Naive thymus-derived CD4-positive, alpha-beta T cell (primary cell): ENCODE measurements at regions of chr2 and their contacts with region 1.

Region 1: GRCh38 chr2:196171248-196171871 is at the start of gene STK17B:
- DNase-seq: peak; percentile 92 to 97 (median 95)
- ATAC-seq: peak; percentile 81
- H3K4me3 ChIP-seq: peak within 1 kb of the TSS; percentile 78
- H3K4me3 Mint-ChIP-seq: peak within 1 kb of the TSS; percentile 87 to 98 (median 94)
- H3K27ac ChIP-seq: peak within 1 kb of the TSS; percentile 98
- H3K27ac Mint-ChIP-seq: peak within 1 kb of the TSS; percentile 89 to 98 (median 96)
- H3K4me1 ChIP-seq: peaks cover 29 to 37% of the 10 kb centered on the region in 2 donors
- H3K4me1 Mint-ChIP-seq: peaks cover 19 to 43% (median 38%) of the 10 kb centered on the region in 7 donors
- H3K27me3 ChIP-seq: no peaks in the 10 kb centered on the region
- H3K27me3 Mint-ChIP-seq: peaks cover 0 to 2% (median 0%) of the 10 kb centered on the region in 5 donors
- total RNA-seq, gene STK17B: 274 to 513 (median 338) TPM

Region 2: GRCh38 chr2:195533771-195534642 is 637.4 kb before region 1 on chr2:
- CTCF ChIA-PET with region 1: no interaction called
- POLR2A ChIA-PET with region 1: interaction called, 7 read pairs
- intact Hi-C with region 1: loop called (anchors 2 to 5 kb)
- DNase-seq: peak in 8 of 9 donors; percentile 28 to 63 (median 42)
- ATAC-seq: peak; percentile 48
- H3K4me3 ChIP-seq: peak overlapping the region; percentile 51
- H3K4me3 Mint-ChIP-seq: peak overlapping the region; percentile 77 to 95 (median 90)
- H3K27ac ChIP-seq: peak overlapping the region; percentile 77
- H3K27ac Mint-ChIP-seq: peak overlapping the region; percentile 92 to 100 (median 98)
- H3K4me1 ChIP-seq: peaks cover 70 to 73% of the 10 kb centered on the region in 2 donors
- H3K4me1 Mint-ChIP-seq: peaks cover 69 to 90% (median 86%) of the 10 kb centered on the region in 7 donors
- H3K27me3 ChIP-seq: no peaks in the 10 kb centered on the region
- H3K27me3 Mint-ChIP-seq: no peaks in the 10 kb centered on the region

Region 3: DNA sequence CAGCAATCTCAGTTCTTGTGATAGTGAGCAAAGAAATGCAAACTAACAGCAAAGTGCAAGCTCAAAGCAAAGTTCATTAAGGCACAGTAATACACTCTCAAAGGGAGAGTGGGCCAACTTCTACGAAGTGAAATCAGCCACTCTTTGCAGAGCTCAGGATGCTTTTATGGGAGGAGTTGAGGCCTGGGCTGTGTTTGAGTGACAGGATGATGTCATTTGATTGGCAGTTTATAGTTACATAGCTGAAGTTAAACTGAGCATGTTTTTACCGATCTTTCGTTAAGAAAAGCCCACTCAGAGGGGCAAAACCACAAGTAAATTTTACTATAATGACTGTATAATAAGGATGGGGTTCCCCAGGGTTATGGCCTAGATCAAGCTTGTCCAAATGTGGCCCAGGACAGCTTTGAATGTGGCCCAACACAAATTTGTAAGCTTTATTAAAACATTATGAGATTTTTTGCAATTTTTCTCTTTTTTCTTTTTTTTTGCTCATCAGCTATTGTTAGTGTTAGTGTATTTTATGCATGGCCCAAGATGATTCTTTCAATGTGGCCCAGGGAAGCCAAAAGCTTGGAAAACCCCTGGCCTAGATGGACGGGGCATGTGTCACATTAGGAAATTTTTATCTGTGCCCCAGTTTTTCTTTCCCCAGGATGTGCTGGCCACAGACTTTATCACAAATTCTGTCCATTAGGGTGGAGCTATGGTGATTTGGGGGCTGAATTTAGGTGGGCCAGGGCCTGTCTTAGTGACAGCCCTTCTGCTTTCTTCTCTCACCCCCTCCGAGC is 94.4 kb before region 1 on chr2:
- CTCF ChIA-PET with region 1: interaction called, 16 read pairs
- POLR2A ChIA-PET with region 1: interaction called, 39 read pairs
- intact Hi-C with region 1: loop called in 1 of 2 experiments (anchors 1 kb)
- DNase-seq: no peak
- ATAC-seq: no peak
- H3K4me3 ChIP-seq: no peak overlapping the region
- H3K4me3 Mint-ChIP-seq: no peak overlapping the region
- H3K27ac ChIP-seq: no peak overlapping the region
- H3K27ac Mint-ChIP-seq: no peak overlapping the region
- H3K4me1 ChIP-seq: peaks cover 9 to 13% of the 10 kb centered on the region in 2 donors
- H3K4me1 Mint-ChIP-seq: peaks cover 10 to 34% (median 25%) of the 10 kb centered on the region in 7 donors
- H3K27me3 ChIP-seq: no peaks in the 10 kb centered on the region
- H3K27me3 Mint-ChIP-seq: no peaks in the 10 kb centered on the region

Region 4: GRCh38 chr2:196160101-196160500 is 11.3 kb before region 1 on chr2:
- CTCF ChIA-PET with region 1: interaction called, 9 read pairs
- POLR2A ChIA-PET with region 1: interaction called, 87 read pairs
- intact Hi-C with region 1: loop called (anchors 1 kb)
- DNase-seq: peak in 8 of 9 donors; percentile 61 to 92 (median 88)
- ATAC-seq: peak; percentile 84
- H3K4me3 ChIP-seq: peak overlapping the region; percentile 33
- H3K4me3 Mint-ChIP-seq: peak overlapping the region; percentile 61 to 98 (median 87)
- H3K27ac ChIP-seq: peak overlapping the region; percentile 94
- H3K27ac Mint-ChIP-seq: peak overlapping the region; percentile 84 to 98 (median 94)
- H3K4me1 ChIP-seq: peaks cover 53 to 65% of the 10 kb centered on the region in 2 donors
- H3K4me1 Mint-ChIP-seq: peaks cover 45 to 85% (median 69%) of the 10 kb centered on the region in 7 donors
- H3K27me3 ChIP-seq: no peaks in the 10 kb centered on the region
- H3K27me3 Mint-ChIP-seq: no peaks in the 10 kb centered on the region

Region 5: DNA sequence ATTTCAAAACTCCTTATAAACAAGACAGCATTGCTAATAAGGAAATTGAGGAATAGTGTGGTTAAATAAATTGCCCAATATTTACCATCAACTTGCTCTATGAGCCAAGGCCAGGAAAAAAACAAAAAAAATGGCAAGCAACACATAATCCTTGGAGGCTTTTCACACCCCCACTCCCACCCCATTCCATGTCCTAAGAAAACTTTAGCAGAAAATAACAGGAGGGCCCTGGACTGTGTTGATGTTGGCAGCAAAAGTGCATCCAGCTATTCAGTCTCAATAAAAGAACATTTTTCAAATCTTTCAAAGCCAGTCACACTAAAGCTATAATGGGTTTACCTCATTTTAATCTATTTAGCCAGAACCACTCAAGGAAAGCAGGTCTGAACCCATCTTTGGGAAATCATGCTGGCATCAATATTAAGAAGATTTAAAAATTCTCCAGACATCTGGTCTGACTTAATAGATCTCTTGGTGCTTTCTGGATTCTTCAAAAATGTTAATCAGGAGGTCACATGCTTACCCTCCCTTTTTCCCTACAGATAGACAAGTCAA is 34.6 kb after region 1 on chr2:
- CTCF ChIA-PET with region 1: interaction called, 5 read pairs
- POLR2A ChIA-PET with region 1: interaction called, 359 read pairs
- intact Hi-C with region 1: loop called (anchors 1 kb)
- DNase-seq: no peak
- ATAC-seq: no peak
- H3K4me3 ChIP-seq: no peak overlapping the region
- H3K4me3 Mint-ChIP-seq: no peak overlapping the region
- H3K27ac ChIP-seq: no peak overlapping the region
- H3K27ac Mint-ChIP-seq: peak overlapping the region in 7 of 9 donors; percentile 28 to 85 (median 66)
- H3K4me1 ChIP-seq: peaks cover 17 to 31% of the 10 kb centered on the region in 2 donors
- H3K4me1 Mint-ChIP-seq: peaks cover 29 to 75% (median 51%) of the 10 kb centered on the region in 7 donors
- H3K27me3 ChIP-seq: no peaks in the 10 kb centered on the region
- H3K27me3 Mint-ChIP-seq: no peaks in the 10 kb centered on the region

Region 6: GRCh38 chr2:196239622-196240587 is 68.5 kb after region 1 on chr2:
- CTCF ChIA-PET with region 1: interaction called, 4 read pairs
- POLR2A ChIA-PET with region 1: interaction called, 38 read pairs
- intact Hi-C with region 1: loop called (anchors 1 kb)
- DNase-seq: peak; percentile 33 to 90 (median 83)
- ATAC-seq: peak; percentile 87
- H3K4me3 ChIP-seq: peak overlapping the region; percentile 36
- H3K4me3 Mint-ChIP-seq: peak overlapping the region; percentile 64 to 87 (median 76)
- H3K27ac ChIP-seq: peak overlapping the region; percentile 71
- H3K27ac Mint-ChIP-seq: peak overlapping the region; percentile 90 to 99 (median 97)
- H3K4me1 ChIP-seq: peaks cover 57 to 60% of the 10 kb centered on the region in 2 donors
- H3K4me1 Mint-ChIP-seq: peaks cover 55 to 90% (median 80%) of the 10 kb centered on the region in 7 donors
- H3K27me3 ChIP-seq: no peaks in the 10 kb centered on the region
- H3K27me3 Mint-ChIP-seq: no peaks in the 10 kb centered on the region

Region 7: DNA sequence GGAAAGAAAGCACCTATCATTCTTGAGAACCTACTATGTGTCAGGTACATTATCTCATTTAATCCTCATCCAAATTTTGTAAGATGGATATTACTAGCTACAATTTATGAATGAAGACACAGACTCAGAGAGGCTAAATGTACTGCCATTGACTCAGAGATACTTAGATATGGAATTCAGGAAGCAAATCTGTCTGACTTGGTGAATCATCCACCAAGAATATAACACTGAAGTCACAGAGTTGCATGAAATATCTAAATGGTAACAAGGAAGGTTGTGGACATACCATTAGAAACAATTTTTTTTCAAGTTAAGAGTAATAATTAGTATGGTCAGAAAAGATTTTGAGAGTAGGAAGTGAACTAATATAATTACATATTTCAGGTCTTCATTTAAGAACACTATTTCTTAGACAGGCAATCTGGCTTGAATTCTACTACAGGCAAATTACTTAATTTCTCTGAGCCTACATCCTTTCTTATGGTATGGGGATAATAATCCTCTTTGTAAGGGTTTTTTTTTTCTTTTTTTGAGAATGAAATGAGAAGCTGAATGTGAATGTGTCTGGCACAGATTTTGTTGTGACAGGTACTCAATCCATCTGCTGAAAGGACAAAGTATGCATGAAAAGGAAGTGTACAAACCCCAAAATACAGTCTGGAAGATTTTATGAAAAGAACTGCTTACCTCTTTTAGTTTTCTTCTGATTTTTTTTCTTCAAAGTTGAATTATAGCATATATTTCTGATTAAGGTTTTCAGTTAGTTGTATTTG is 652.6 kb after region 1 on chr2:
- CTCF ChIA-PET with region 1: no interaction called
- POLR2A ChIA-PET with region 1: no interaction called
- intact Hi-C with region 1: no loop called
- DNase-seq: no peak
- ATAC-seq: no peak
- H3K4me3 ChIP-seq: no peak overlapping the region
- H3K4me3 Mint-ChIP-seq: no peak overlapping the region
- H3K27ac ChIP-seq: no peak overlapping the region
- H3K27ac Mint-ChIP-seq: no peak overlapping the region
- H3K4me1 ChIP-seq: no peaks in the 10 kb centered on the region
- H3K4me1 Mint-ChIP-seq: peaks cover 0 to 18% (median 1%) of the 10 kb centered on the region in 7 donors
- H3K27me3 ChIP-seq: no peaks in the 10 kb centered on the region
- H3K27me3 Mint-ChIP-seq: peaks cover 0 to 29% (median 16%) of the 10 kb centered on the region in 5 donors

Region 8: DNA sequence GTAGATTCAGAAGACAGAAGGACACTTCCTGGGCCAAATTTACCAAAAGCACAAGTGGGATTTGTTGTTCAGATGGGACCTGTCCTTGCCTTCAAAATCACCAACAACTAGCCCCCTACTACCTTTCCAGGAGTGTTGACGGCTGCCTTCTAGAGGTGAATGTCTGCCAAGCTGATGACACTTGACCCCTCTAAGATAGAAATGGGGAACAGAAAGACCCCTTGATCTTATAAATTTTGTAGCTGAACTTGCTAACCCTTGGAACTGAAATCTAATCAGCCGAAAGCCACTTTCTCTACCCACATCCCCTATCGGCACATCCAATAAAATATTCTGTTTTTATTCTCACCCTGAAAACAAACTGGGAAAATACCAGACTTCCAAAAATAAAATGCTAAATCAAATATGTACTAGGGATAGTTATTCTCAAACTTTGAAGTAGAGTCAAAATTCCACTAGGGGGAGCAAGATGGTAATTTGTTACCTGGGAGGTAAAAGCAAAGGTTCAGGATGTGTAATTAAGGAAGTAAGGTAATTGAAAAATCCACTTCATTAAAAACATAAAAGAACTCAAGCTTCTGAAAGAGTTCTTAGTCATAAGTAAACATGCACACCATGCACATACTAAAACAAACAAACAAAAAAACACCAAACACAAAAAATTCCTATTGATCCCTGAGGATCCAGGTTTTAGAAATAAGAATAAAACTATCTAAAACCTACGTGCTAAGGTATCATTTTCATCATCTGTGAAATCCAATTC is 1020.0 kb after region 1 on chr2:
- CTCF ChIA-PET with region 1: no interaction called
- POLR2A ChIA-PET with region 1: no interaction called
- intact Hi-C with region 1: loop called (anchors 10 kb)
- DNase-seq: peak in 7 of 9 donors; percentile 59 to 75 (median 72)
- ATAC-seq: peak; percentile 78
- H3K4me3 ChIP-seq: no peak overlapping the region
- H3K4me3 Mint-ChIP-seq: peak overlapping the region in 9 of 10 donors; percentile 12 to 78 (median 51)
- H3K27ac ChIP-seq: peak overlapping the region; percentile 65
- H3K27ac Mint-ChIP-seq: peak overlapping the region; percentile 74 to 91 (median 79)
- H3K4me1 ChIP-seq: peaks cover 56 to 72% of the 10 kb centered on the region in 2 donors
- H3K4me1 Mint-ChIP-seq: peaks cover 49 to 95% (median 90%) of the 10 kb centered on the region in 7 donors
- H3K27me3 ChIP-seq: no peaks in the 10 kb centered on the region
- H3K27me3 Mint-ChIP-seq: no peaks in the 10 kb centered on the region